ENCODE measurements at regions of chr1 and their contacts with region 1.

Region 1: DNA sequence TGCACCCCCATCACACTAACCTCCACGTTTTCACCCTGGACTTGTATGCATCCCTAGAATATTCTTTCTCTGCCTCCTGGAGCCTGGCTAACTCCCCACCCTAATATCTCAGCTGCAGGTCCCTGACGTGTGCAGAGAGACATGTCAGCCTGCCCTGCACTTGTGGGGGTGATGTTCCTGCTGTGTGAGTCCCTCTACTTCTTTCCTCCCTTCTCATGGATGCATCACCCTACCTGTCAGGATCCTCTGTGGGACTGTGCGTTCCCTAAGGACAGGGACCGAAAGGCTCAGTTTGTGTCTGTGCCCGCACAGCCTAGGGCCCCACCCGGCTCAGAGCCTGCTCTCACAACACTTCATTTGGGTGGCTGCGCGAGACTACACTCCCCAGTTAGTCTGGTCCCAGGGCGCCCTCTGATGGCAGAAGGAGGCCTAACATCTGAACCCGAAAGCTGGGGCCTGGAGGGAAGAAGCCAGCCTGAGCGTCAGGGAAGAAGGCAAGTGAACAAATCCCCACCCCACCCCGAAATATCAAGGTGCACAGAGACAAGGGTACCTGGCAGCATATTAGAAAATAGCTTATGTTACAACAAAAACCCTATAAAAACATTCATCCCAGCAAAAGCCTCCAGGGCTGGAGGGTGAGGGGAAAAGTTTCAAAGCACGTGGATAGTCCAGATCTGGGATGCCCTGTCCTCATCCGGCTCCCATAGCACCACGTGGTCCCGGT is 3.7 kb downstream of the CD52 start:
- DNase-seq: peak; percentile 98
- ATAC-seq: peak; percentile 62
- H3K4me3 Mint-ChIP-seq: peak overlapping the region; percentile 93
- H3K27ac Mint-ChIP-seq: peak overlapping the region; percentile 94
- H3K4me1 Mint-ChIP-seq: peaks cover 49% of the 10 kb centered on the region
- H3K27me3 Mint-ChIP-seq: no peaks in the 10 kb centered on the region
- CTCF ChIP-seq: peak; percentile 94

Region 2: GRCh38 chr1:25780311-25781129 is 541.0 kb before region 1 on chr1:
- CTCF ChIA-PET with region 1: no interaction called
- POLR2A ChIA-PET with region 1: no interaction called
- intact Hi-C with region 1: no loop called
- DNase-seq: no peak
- ATAC-seq: no peak
- H3K4me3 Mint-ChIP-seq: no peak overlapping the region
- H3K27ac Mint-ChIP-seq: no peak overlapping the region
- H3K4me1 Mint-ChIP-seq: peaks cover 5% of the 10 kb centered on the region
- H3K27me3 Mint-ChIP-seq: no peaks in the 10 kb centered on the region
- CTCF ChIP-seq: no peak

Region 3: GRCh38 chr1:26233903-26234643 is 87.4 kb before region 1 on chr1 and contains the start of gene CEP85:
- CTCF ChIA-PET with region 1: interaction called, 21 read pairs
- POLR2A ChIA-PET with region 1: no interaction called
- intact Hi-C with region 1: no loop called
- DNase-seq: peak; percentile 99
- ATAC-seq: peak; percentile 94
- H3K4me3 Mint-ChIP-seq: peak within 1 kb of the TSS; percentile 98
- H3K27ac Mint-ChIP-seq: peak within 1 kb of the TSS; percentile 92
- H3K4me1 Mint-ChIP-seq: peaks cover 27% of the 10 kb centered on the region
- H3K27me3 Mint-ChIP-seq: no peaks in the 10 kb centered on the region
- CTCF ChIP-seq: peak; percentile 26
- total RNA-seq, gene CEP85: 32.8 to 33.7 TPM

Region 4: DNA sequence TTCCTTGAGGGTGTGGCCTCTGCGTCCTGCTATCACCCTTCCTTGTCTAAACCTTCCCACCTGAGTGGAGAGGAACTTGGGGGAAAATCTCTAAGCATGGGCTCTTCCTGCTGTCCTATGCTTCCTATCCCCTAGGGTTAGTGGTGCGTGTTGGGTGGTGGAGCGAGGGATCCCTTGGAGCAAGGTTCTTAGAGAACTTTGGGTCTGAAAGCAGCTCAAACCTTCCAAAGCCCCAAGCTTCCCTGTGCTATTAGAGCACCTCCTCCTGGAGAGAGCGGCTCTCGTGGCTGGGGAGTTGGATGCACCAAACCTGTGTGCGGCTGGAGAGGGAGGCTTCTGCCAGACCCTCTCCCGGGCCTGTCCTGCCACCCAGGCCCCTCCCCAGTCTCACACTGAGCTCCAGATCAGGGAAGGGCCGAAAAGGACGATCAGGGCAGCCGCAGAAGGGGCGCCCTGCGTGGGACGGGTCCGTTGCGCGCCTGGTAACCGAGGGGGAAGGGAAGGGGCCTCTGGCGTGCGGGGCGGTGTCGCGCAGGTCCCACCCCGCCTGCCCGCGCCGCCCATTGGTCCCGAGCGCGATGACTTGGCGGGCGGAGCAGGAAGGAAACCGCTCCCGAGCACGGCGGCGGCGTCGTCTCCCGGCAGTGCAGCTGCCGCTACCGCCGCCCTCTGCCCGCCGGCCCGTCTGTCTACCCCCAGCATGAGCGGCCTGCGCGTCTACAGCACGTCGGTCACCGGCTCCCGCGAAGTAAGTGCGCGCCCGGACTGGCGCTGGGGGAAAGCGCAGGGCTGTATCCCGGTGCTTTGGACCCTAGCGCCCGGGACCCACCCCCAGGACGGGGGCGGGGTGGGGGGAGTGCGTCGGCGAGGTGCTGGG is 41.8 kb before region 1 on chr1 and contains the start of gene SH3BGRL3:
- CTCF ChIA-PET with region 1: interaction called, 282 read pairs
- POLR2A ChIA-PET with region 1: interaction called, 284 read pairs
- intact Hi-C with region 1: loop called (anchors 2 kb)
- DNase-seq: peak; percentile 88
- ATAC-seq: peak; percentile 51
- H3K4me3 Mint-ChIP-seq: peak within 1 kb of the TSS; percentile 88
- H3K27ac Mint-ChIP-seq: peak within 1 kb of the TSS; percentile 99
- H3K4me1 Mint-ChIP-seq: peaks cover 83% of the 10 kb centered on the region
- H3K27me3 Mint-ChIP-seq: no peaks in the 10 kb centered on the region
- CTCF ChIP-seq: no peak
- total RNA-seq, gene SH3BGRL3: 309 to 316 TPM

Region 5: DNA sequence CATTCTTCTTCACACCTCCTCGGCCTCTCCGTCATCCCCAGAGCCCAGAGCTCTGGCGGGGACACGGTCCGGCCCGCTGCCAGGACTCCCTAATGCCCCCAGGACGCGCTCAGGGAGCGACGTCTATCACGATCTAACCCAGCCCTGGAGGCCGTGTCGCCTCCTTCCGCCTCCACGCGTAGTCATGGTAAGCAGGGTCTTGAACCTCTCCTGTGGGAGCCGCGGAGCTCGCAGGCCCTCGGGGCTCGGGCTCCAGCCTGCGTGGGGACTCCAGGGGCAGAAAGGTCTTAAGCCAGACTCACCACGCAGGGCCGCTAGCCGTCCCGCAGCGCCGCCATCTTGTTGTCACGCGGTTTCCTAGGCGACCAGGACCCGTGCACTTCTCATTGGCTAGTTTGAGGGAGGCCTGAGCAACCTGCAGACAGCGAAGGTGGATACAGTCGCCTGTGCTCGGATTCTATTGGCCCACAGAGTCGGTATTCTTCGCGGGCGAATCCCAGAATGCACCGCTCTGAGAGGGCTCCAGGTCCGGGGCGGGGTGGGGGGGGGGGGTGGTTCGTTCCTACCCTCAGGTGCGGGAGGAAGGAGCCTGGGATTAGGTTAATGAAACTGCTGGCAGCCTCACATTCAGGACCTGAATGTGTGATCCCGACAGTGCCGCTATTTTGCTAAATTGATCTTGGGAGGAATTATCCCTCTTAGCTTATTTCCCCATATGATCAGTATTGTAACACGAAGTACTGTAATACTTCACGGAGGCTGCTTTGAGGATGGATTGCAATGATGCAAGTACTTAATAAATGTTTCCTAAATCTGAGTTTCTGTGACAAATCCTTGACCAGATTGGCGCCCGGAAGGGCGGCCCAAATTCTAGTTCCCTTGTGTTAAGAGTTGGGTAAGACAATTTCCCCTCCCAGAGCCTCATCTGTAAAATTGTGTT is 14.9 kb before region 1 on chr1 and contains the start of gene UBXN11:
- CTCF ChIA-PET with region 1: interaction called, 45 read pairs
- POLR2A ChIA-PET with region 1: interaction called, 52 read pairs
- intact Hi-C with region 1: no loop called
- DNase-seq: peak; percentile 98
- ATAC-seq: peak; percentile 98
- H3K4me3 Mint-ChIP-seq: peak within 1 kb of the TSS; percentile 86
- H3K27ac Mint-ChIP-seq: peak within 1 kb of the TSS; percentile 93
- H3K4me1 Mint-ChIP-seq: peaks cover 22% of the 10 kb centered on the region
- H3K27me3 Mint-ChIP-seq: no peaks in the 10 kb centered on the region
- CTCF ChIP-seq: no peak
- total RNA-seq, gene UBXN11: 24.9 to 26.0 TPM

Region 6: GRCh38 chr1:26346550-26347033 is 25.1 kb after region 1 on chr1:
- CTCF ChIA-PET with region 1: no interaction called
- POLR2A ChIA-PET with region 1: no interaction called
- intact Hi-C with region 1: no loop called
- DNase-seq: no peak
- ATAC-seq: no peak
- H3K4me3 Mint-ChIP-seq: no peak overlapping the region
- H3K27ac Mint-ChIP-seq: no peak overlapping the region
- H3K4me1 Mint-ChIP-seq: no peaks in the 10 kb centered on the region
- H3K27me3 Mint-ChIP-seq: no peaks in the 10 kb centered on the region
- CTCF ChIP-seq: no peak

Region 7: GRCh38 chr1:26358411-26359384 is 37.2 kb after region 1 on chr1:
- CTCF ChIA-PET with region 1: interaction called, 16 read pairs
- POLR2A ChIA-PET with region 1: interaction called, 5 read pairs
- intact Hi-C with region 1: no loop called
- DNase-seq: peak; percentile 88
- ATAC-seq: peak; percentile 79
- H3K4me3 Mint-ChIP-seq: peak overlapping the region; percentile 60
- H3K27ac Mint-ChIP-seq: peak overlapping the region; percentile 13
- H3K4me1 Mint-ChIP-seq: peaks cover 35% of the 10 kb centered on the region
- H3K27me3 Mint-ChIP-seq: peaks cover 15% of the 10 kb centered on the region
- CTCF ChIP-seq: no peak

Region 8: GRCh38 chr1:26372039-26372438 is 50.6 kb after region 1 on chr1:
- CTCF ChIA-PET with region 1: interaction called, 6 read pairs
- POLR2A ChIA-PET with region 1: no interaction called
- intact Hi-C with region 1: loop called (anchors 5 kb)
- DNase-seq: peak; percentile 31
- ATAC-seq: no peak
- H3K4me3 Mint-ChIP-seq: no peak overlapping the region
- H3K27ac Mint-ChIP-seq: peak overlapping the region; percentile 4
- H3K4me1 Mint-ChIP-seq: peaks cover 72% of the 10 kb centered on the region
- H3K27me3 Mint-ChIP-seq: no peaks in the 10 kb centered on the region
- CTCF ChIP-seq: no peak

Region 9: DNA sequence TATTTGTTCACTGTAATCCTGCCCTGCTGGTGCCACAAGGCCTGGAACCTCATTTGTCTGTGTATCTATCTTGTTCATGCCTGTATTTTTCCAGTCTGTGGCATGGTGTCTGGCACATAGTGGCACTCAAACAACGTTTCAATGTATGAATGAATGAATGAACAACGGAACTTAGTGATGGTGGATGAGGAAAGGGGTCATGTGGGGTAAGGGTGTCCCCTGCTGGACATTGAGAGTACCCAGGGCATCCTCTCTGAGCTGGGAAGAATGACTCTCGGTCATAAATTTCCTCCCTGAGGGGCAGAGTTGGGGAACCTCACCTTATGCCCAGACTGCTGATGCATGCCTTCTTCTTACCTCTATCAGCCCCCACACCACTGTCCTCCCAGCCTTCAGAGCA is 70.0 kb after region 1 on chr1:
- CTCF ChIA-PET with region 1: interaction called, 19 read pairs
- POLR2A ChIA-PET with region 1: no interaction called
- intact Hi-C with region 1: no loop called
- DNase-seq: peak; percentile 71
- ATAC-seq: peak; percentile 69
- H3K4me3 Mint-ChIP-seq: no peak overlapping the region
- H3K27ac Mint-ChIP-seq: no peak overlapping the region
- H3K4me1 Mint-ChIP-seq: peaks cover 40% of the 10 kb centered on the region
- H3K27me3 Mint-ChIP-seq: no peaks in the 10 kb centered on the region
- CTCF ChIP-seq: peak; percentile 82